Activated CD4-positive, alpha-beta T cell treated with anti-CD3 and anti-CD28 coated beads, Interleukin-2, amount 10 ng/mL, durations not matched to agents 24 days and 14 days (primary cell): ENCODE measurements at regions of chr11 and their contacts with region 1.

Region 1: GRCh38 chr11:12174477-12175143 is 64.2 kb downstream of the MICAL2 start:
- DNase-seq: peak; percentile 74
- H3K4me3 Mint-ChIP-seq: peak overlapping the region; percentile 78
- H3K27ac Mint-ChIP-seq: peak overlapping the region; percentile 94
- H3K4me1 Mint-ChIP-seq: peaks cover 71% of the 10 kb centered on the region
- H3K27me3 Mint-ChIP-seq: no peaks in the 10 kb centered on the region

Region 2: GRCh38 chr11:12159351-12160099 is 15.1 kb before region 1 on chr11:
- intact Hi-C with region 1: loop called (anchors 1 kb)
- DNase-seq: no peak
- H3K4me3 Mint-ChIP-seq: peak overlapping the region; percentile 38
- H3K27ac Mint-ChIP-seq: peak overlapping the region; percentile 96
- H3K4me1 Mint-ChIP-seq: peaks cover 81% of the 10 kb centered on the region
- H3K27me3 Mint-ChIP-seq: no peaks in the 10 kb centered on the region

Region 3: GRCh38 chr11:12189543-12190235 is 15.1 kb after region 1 on chr11:
- intact Hi-C with region 1: loop called (anchors 1 kb)
- DNase-seq: peak; percentile 73
- H3K4me3 Mint-ChIP-seq: peak overlapping the region; percentile 65
- H3K27ac Mint-ChIP-seq: peak overlapping the region; percentile 91
- H3K4me1 Mint-ChIP-seq: peaks cover 79% of the 10 kb centered on the region
- H3K27me3 Mint-ChIP-seq: no peaks in the 10 kb centered on the region